ENCODE measurements at regions of chr17 and their contacts with region 1.

Region 1: DNA sequence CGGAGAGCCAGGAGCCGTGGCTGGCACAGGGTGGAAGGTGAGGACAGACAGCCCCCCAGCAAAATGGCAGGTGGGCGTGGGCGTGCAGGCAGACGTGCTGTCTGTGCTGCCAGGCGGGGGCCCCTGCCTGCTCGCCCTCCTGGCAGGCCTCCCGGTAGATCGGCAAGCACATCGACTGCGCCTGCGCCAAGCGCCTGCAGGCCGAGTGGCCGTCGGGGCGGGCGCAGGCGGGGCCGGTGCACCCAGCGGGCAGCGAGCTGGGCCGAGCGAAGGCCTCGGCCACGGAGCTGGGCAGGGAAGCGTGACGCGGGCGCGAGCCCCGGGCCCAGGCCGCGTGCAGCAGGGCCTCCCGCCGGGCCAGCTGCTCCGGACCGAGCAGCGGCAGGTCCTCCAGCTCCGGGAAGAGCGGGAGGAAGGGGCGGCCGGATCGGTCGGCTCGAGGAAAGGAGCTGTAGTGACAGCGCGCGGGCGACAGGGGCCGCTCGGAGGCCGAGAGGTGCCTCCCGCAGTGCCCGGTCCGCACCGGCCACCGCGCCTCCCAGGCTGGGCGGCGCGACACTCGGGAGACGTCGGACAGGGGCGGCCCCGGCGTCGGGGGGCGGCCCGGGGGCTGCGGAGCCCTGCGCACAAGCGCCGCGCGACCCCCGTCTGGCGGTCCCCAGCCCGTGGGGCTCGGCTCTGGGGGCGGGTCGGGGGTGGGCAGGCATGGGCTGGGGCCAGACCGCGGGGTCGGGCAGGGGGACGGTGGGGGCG is 16.9 kb downstream of the GRIN2C start:
- DNase-seq: peak in 2 of 3 donors; percentile 33 to 37
- H3K4me3 ChIP-seq: peak overlapping the region in 6 of 7 experiments; percentile 7 to 57 (median 40)
- H3K27ac ChIP-seq: no peak overlapping the region
- H3K4me1 ChIP-seq: peaks cover 0 to 28% (median 23%) of the 10 kb centered on the region in 4 experiments
- H3K27me3 ChIP-seq: peaks cover 0 to 40% (median 6%) of the 10 kb centered on the region in 5 experiments

Region 2: DNA sequence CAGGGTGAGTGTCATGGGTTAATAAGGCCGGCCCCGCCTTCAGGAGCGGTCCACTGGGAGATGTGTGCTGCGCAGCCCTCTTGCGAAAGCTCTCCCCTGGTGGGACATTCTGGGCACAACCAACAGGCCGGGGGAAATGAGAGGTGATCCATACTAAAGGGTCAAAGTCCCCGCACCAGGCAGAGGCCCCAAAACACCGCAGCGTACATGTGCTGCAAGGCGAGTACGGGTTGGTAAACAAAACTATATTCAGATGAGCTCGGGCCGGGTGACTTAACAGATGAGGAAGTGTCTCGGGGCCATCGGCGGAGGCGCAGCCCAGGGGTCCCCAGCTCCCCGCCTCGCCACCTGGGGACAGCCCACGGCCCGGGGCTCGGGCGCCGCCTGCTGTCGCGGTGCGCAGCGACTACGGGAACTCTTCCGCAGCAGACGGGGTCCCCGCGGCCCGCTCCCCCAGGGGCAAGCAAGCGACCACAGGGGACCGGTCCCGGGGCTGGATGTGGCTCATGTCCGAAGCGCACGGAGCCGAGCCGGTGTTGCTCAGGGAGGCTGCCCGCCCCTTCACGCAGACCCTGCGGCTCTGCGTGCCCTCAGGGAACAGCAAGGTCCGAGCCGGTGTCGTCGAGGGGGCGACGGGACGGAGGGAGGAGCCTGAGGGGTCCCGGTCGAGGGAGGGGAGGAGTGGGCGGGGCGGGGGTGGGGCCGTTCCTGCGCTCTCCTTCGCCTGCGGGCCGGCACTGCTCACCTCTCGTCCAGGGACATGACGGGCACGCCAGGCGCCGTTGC is 106.1 kb before region 1 on chr17 and contains the start of gene RAB37:
- CTCF ChIA-PET with region 1: no interaction called
- POLR2A ChIA-PET with region 1: no interaction called
- DNase-seq: peak; percentile 89 to 97 (median 95)
- H3K4me3 ChIP-seq: peak within 1 kb of the TSS; percentile 61 to 88 (median 70)
- H3K27ac ChIP-seq: peak within 1 kb of the TSS; percentile 81 to 89
- H3K4me1 ChIP-seq: peaks cover 6 to 61% (median 55%) of the 10 kb centered on the region in 4 experiments
- H3K27me3 ChIP-seq: no peaks in the 10 kb centered on the region

Region 3: GRCh38 chr17:74825952-74826719 is 16.6 kb before region 1 on chr17:
- CTCF ChIA-PET with region 1: interaction called, 11 read pairs
- POLR2A ChIA-PET with region 1: no interaction called
- DNase-seq: no peak
- H3K4me3 ChIP-seq: no peak overlapping the region
- H3K27ac ChIP-seq: no peak overlapping the region
- H3K4me1 ChIP-seq: no peaks in the 10 kb centered on the region
- H3K27me3 ChIP-seq: no peaks in the 10 kb centered on the region

Region 4: DNA sequence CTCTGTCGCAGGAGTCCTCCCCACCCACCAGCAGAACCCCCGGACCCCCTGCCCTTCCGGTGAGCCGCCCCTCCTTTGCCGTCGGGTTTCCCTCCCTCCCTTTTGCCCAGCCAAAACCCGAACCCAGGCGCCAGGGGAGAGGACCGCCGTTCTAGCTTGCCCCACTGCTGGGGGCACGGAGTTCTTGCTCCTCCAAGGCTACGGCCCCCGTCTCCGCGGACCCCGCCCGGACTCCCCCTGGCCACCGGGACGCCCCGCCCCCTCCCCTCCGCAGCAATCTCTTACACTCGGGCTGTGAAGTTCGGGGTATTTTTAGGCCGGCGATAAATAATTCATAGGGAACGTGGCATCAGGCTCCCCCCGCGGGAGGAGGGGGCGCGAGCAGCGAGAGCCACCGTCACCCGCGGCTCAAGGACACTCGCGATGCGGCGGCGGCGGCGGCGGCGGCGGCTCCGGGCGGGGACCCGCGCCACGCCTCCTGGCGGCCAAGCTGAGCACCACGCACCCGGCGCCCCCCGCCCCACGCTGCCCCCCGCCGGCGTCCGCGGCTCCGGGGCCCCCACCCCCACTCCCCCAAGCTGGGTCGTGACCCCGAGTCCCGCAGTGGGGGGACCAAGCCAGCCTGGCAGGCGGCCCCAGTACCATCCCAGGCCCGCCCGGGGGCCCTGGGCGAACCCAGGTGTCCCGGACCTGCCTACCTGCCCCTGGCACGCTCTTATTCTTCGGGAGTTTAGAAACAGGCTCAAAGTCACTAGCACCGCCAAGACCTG is 16.9 kb after region 1 on chr17 and contains the start of gene GRIN2C:
- CTCF ChIA-PET with region 1: interaction called, 26 read pairs
- POLR2A ChIA-PET with region 1: no interaction called
- DNase-seq: peak in 2 of 3 donors; percentile 24 to 43
- H3K4me3 ChIP-seq: peak within 1 kb of the TSS in 4 of 7 experiments; percentile 19 to 52 (median 38)
- H3K27ac ChIP-seq: no peak within 1 kb of the TSS
- H3K4me1 ChIP-seq: peaks cover 0 to 28% (median 20%) of the 10 kb centered on the region in 4 experiments
- H3K27me3 ChIP-seq: peaks cover 0 to 72% (median 28%) of the 10 kb centered on the region in 5 experiments

Region 5: DNA sequence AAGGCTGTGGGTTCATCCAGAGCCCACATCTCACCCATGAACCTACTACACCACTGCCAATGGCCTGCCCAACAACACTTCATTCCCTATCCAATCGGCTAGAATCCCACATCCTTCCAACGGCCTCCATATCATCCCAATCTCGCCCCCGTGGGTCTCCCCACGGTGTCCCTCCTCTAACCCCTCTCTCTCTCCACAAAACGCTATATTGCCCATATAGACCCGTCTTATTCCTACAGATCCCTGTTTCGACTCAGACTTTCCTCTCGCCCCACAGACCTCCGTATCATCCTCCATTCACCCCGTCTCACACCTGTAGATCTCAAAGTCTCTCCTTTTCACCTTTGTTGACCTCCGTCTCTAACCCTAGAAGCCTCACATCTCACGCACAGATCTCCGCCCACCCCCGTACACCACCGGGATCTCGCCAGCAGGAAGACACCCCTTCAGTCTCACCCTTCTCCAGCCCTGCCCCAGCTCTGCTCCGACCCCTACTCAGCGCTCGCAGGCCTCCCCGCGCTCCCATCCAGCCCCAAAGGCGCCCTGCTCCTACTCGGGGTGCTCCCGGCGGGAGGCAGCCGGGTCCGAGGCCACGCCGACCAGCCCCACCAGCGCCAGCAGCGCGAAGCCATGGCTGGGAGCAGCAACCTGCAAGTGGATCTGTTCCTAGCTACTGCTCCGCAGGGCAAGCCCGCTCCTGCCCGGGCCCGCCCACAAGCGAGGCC is 29.7 kb after region 1 on chr17 and contains the start of gene FDXR:
- CTCF ChIA-PET with region 1: interaction called, 20 read pairs
- POLR2A ChIA-PET with region 1: no interaction called
- DNase-seq: no peak
- H3K4me3 ChIP-seq: peak within 1 kb of the TSS; percentile 68 to 95 (median 85)
- H3K27ac ChIP-seq: peak within 1 kb of the TSS; percentile 86 to 94
- H3K4me1 ChIP-seq: peaks cover 4 to 29% (median 13%) of the 10 kb centered on the region in 4 experiments
- H3K27me3 ChIP-seq: no peaks in the 10 kb centered on the region